IMR-90 (cell line): ENCODE measurements at regions of chr10 and their contacts with region 1.

Region 1: DNA sequence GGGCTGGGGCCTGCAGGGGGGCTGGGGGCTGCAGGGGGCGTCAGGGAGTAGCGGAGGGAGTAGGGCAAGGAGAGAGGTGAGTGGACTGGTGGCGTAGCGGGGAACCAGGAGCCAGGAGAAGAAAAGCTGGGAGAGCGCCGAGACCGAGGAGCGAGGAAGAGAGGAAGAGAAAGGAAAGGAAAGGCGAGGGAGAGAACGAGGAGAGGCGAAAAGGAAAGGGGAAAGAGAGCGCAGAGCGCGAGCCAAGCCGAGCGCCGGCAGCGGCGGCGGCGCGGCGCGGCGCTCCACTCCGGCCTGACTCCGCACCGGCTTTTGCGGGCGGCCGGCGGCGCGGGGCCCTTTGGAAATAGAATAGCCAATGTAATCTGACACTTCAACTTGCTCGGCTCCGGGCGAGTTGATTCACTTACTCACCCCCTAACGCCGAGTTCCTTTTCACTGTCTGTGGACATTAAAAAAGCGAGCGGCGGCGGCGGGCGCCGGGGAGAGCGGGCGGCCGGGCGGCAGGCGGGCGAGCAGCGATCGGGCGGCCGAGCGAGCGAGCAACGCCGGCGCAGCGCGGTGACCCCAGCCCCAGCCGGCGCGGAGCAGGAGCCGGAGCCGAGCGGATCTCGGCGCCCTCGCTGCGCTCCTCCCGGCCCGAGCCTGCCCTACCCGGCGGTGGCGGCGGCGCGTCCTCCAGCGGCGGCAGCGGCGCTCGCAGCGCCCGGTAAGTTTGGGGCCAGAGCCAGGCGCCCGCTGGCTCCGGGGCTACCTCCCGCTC is at the start of gene ZMIZ1:
- DNase-seq: peak; percentile 93
- ATAC-seq: peak; percentile 30
- H3K4me3 ChIP-seq: peak within 1 kb of the TSS; percentile 99
- H3K27ac ChIP-seq: peak within 1 kb of the TSS; percentile 99
- H3K4me1 ChIP-seq: peaks cover 22% of the 10 kb centered on the region
- H3K27me3 ChIP-seq: no peaks in the 10 kb centered on the region
- CTCF ChIP-seq: peak; percentile 39
- POLR2A ChIP-seq: peak; percentile 87
- RAD21 ChIP-seq: peak; percentile 31
- total RNA-seq, gene ZMIZ1: 6.6 and 6.7 TPM in 2 replicates

Region 2: DNA sequence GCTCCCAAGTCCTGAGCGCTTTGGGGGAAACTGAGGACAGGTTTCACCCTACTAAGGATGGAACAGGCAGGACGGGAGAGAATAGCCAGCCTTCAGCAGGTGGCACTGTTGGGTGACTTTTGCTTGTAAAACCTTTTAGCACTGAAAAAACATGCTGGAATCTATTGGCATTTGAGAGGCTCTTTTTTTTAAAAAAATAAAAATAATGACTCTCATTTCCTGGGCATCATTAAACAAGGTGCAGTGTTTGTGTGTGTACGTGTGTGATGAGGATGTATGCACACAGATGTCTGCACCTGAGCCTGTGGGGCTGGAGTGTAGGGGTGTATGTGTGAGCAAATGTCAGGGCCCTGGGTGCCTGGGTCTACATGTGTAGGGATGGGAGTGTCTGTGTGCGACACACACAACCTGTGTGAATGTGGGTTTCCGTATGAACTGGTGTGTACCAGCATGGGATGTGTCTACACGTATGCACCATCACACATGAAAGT is 857.1 kb before region 1 on chr10:
- CTCF ChIA-PET with region 1: no interaction called
- POLR2A ChIA-PET with region 1: no interaction called
- dilution Hi-C with region 1: no loop called
- in situ Hi-C with region 1: no loop called
- intact Hi-C with region 1: loop called (anchors 2 kb)
- DNase-seq: peak; percentile 67
- ATAC-seq: peak; percentile 77
- H3K4me3 ChIP-seq: no peak overlapping the region
- H3K27ac ChIP-seq: no peak overlapping the region
- H3K4me1 ChIP-seq: peaks cover 12% of the 10 kb centered on the region
- H3K27me3 ChIP-seq: peaks cover 3% of the 10 kb centered on the region; the same call in 1 of the 2 replicates
- CTCF ChIP-seq: peak; percentile 81
- POLR2A ChIP-seq: no peak
- RAD21 ChIP-seq: peak; percentile 90

Region 3: DNA sequence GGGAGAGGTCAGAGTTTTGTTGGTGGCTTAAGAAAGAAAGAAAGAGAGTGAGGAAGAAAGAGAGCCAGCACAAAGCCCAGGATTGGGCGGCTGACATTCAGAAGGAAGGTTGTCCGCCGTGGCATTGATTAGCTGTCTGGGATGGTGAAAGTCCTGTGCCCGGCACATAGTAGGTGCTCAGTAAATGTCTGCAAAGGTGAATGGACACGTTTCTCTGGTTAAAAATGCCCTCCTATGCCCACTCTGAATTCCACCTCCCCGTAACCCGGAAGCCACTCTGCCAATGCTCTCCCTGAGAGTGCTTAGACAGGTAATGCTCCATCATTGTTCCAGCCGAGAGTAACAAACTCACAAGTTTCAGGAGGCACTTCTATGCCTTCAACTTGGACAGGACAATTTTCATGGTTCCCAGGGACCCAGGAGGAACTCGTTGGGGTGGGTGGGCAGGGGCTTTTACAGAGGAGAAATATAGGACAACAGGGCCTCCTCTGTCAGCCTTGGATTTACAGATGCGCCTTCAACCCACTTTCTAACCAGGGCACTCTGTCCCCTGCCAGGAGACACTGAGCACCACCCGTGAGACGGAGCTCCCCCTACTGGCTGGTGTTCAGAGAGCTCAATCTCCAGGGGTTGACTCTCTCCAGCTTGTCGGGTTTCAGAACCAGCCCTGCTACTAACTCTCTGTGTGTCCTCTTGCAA is 411.4 kb before region 1 on chr10:
- CTCF ChIA-PET with region 1: no interaction called
- POLR2A ChIA-PET with region 1: no interaction called
- dilution Hi-C with region 1: no loop called
- in situ Hi-C with region 1: no loop called
- intact Hi-C with region 1: loop called (anchors 5 kb)
- DNase-seq: peak; percentile 43
- ATAC-seq: peak; percentile 88
- H3K4me3 ChIP-seq: no peak overlapping the region
- H3K27ac ChIP-seq: no peak overlapping the region
- H3K4me1 ChIP-seq: 0 out of 2 replicates have a peak, but pooled peaks cover 2% of the 10 kb centered on the region
- H3K27me3 ChIP-seq: peaks cover 5% of the 10 kb centered on the region; the same call in 1 of the 2 replicates
- CTCF ChIP-seq: peak; percentile 73
- POLR2A ChIP-seq: no peak
- RAD21 ChIP-seq: peak; percentile 78

Region 4: GRCh38 chr10:78931321-78932053 is 137.3 kb before region 1 on chr10:
- CTCF ChIA-PET with region 1: no interaction called
- POLR2A ChIA-PET with region 1: no interaction called
- dilution Hi-C with region 1: no loop called
- in situ Hi-C with region 1: no loop called
- intact Hi-C with region 1: loop called (anchors 5 kb)
- DNase-seq: peak; percentile 88
- ATAC-seq: peak; percentile 94
- H3K4me3 ChIP-seq: no peak overlapping the region
- H3K27ac ChIP-seq: 0 out of 2 replicates have a peak overlapping the region, but pooled peaks have one; percentile 2
- H3K4me1 ChIP-seq: peaks cover 19% of the 10 kb centered on the region
- H3K27me3 ChIP-seq: no peaks in the 10 kb centered on the region; the same call in 1 of the 2 replicates
- CTCF ChIP-seq: no peak
- POLR2A ChIP-seq: no peak
- RAD21 ChIP-seq: no peak

Region 5: GRCh38 chr10:78996792-78997129 is 72.0 kb before region 1 on chr10:
- CTCF ChIA-PET with region 1: no interaction called
- POLR2A ChIA-PET with region 1: interaction called, 14 read pairs
- dilution Hi-C with region 1: no loop called
- in situ Hi-C with region 1: no loop called
- intact Hi-C with region 1: no loop called
- DNase-seq: no peak
- ATAC-seq: no peak
- H3K4me3 ChIP-seq: no peak overlapping the region
- H3K27ac ChIP-seq: no peak overlapping the region
- H3K4me1 ChIP-seq: peaks cover 12% of the 10 kb centered on the region; the same call in 1 of the 2 replicates
- H3K27me3 ChIP-seq: peaks cover 7% of the 10 kb centered on the region
- CTCF ChIP-seq: no peak
- POLR2A ChIP-seq: no peak
- RAD21 ChIP-seq: no peak

Region 6: GRCh38 chr10:79178614-79179163 is 109.9 kb after region 1 on chr10:
- CTCF ChIA-PET with region 1: no interaction called
- POLR2A ChIA-PET with region 1: no interaction called
- dilution Hi-C with region 1: no loop called
- in situ Hi-C with region 1: no loop called
- intact Hi-C with region 1: loop called (anchors 5 kb)
- DNase-seq: peak; percentile 93
- ATAC-seq: peak; percentile 74
- H3K4me3 ChIP-seq: no peak overlapping the region
- H3K27ac ChIP-seq: peak overlapping the region; percentile 79
- H3K4me1 ChIP-seq: peaks cover 82% of the 10 kb centered on the region
- H3K27me3 ChIP-seq: no peaks in the 10 kb centered on the region
- CTCF ChIP-seq: 0 out of 2 replicates have a peak, but pooled peaks have one; percentile 5
- POLR2A ChIP-seq: no peak
- RAD21 ChIP-seq: peak; percentile 26

Region 7: DNA sequence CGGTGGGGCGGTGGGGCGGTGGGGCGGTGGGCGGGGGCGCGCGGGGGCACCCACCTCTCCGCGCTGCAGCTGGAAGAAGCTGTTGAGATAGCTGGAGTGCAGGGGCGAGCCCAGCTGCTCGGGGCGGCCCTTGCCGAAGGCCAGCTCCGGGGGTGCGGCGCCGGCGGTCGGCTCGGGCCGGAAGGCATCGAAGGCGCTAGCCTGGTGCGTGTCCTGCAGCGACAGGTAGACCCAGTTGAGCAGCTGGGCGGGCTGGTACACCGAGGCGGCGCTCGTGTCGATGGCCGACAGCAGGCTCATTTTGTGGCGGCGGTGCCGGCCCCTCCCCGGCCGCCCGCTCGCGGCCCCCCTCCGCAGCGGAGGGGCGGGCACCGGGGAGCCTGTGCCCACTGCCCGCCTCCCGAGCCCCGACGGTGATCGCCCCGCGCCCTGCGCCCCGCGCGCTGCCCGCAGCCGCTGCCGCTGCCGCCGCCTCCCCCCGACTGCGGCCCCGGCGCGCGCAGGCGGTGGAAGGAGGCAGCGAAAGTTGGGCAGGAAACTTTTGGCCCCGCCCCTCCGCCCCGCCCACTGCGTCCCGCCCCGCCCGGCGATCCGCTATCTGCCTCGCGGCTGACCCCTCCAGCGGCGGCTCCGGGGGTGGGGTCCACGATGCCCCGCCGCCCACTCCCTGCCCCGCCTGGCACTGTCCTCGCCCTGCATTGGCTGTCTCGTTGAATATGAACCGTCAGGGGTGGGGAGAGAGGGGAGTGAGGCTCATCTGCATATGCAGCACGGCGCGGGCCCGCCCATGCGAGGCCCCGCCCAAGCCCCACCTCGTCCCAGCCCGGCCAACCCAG is 376.6 kb after region 1 on chr10 and contains the start of gene ZCCHC24:
- CTCF ChIA-PET with region 1: no interaction called
- POLR2A ChIA-PET with region 1: no interaction called
- dilution Hi-C with region 1: no loop called
- in situ Hi-C with region 1: no loop called
- intact Hi-C with region 1: no loop called
- DNase-seq: peak; percentile 99
- ATAC-seq: peak; percentile 90
- H3K4me3 ChIP-seq: peak within 1 kb of the TSS; percentile 87
- H3K27ac ChIP-seq: peak within 1 kb of the TSS; percentile 92
- H3K4me1 ChIP-seq: peaks cover 31% of the 10 kb centered on the region
- H3K27me3 ChIP-seq: no peaks in the 10 kb centered on the region
- CTCF ChIP-seq: no peak
- POLR2A ChIP-seq: peak; percentile 74; the same call in 1 of the 2 replicates
- RAD21 ChIP-seq: no peak; the same call in 1 of the 2 replicates
- total RNA-seq, gene ZCCHC24: 12.2 and 15.1 TPM in 2 replicates